ENCODE measurements at regions of chr2 and their contacts with region 1.

Region 1: DNA sequence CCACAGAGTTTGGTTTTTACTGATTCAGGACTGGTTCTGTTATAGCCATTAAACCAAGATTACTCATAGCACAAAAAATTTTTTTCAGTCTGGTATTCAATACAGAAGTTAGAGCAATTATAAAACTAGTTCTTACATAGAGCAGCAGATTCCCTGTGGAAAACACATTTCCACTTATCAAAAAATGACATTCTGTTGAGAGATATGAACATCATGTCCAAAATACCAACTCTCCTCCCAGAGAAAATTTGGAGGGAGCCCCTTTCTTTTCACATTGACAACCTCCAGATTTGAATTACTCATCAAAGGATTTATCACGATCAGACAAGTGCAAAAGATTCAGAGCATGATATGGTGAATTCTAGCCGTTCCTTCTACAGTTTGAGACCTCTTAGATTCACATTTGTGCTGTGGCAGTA is 126.8 kb upstream of the SERPINE2 start:
- DNase-seq: no peak
- H3K4me3 ChIP-seq: no peak overlapping the region
- H3K27ac ChIP-seq: no peak overlapping the region
- H3K4me1 ChIP-seq: no peaks in the 10 kb centered on the region
- H3K27me3 ChIP-seq: peaks cover 0 to 2% of the 10 kb centered on the region in 2 experiments
- CTCF ChIP-seq: no peak
- POLR2A ChIP-seq: no peak

Region 2: GRCh38 chr2:224151161-224151560 is 14.7 kb before region 1 on chr2:
- CTCF ChIA-PET with region 1: no interaction called
- POLR2A ChIA-PET with region 1: no interaction called
- dilution Hi-C with region 1: no loop called
- intact Hi-C with region 1: loop called (anchors 1 kb)
- DNase-seq: no peak
- H3K4me3 ChIP-seq: no peak overlapping the region
- H3K27ac ChIP-seq: no peak overlapping the region
- H3K4me1 ChIP-seq: peaks cover 7% of the 10 kb centered on the region
- H3K27me3 ChIP-seq: no peaks in the 10 kb centered on the region
- CTCF ChIP-seq: no peak
- POLR2A ChIP-seq: no peak

Measured in endothelial cell of umbilical vein (primary cell).